ENCODE measurements at regions of chr19 and their contacts with region 1.

Region 1: DNA sequence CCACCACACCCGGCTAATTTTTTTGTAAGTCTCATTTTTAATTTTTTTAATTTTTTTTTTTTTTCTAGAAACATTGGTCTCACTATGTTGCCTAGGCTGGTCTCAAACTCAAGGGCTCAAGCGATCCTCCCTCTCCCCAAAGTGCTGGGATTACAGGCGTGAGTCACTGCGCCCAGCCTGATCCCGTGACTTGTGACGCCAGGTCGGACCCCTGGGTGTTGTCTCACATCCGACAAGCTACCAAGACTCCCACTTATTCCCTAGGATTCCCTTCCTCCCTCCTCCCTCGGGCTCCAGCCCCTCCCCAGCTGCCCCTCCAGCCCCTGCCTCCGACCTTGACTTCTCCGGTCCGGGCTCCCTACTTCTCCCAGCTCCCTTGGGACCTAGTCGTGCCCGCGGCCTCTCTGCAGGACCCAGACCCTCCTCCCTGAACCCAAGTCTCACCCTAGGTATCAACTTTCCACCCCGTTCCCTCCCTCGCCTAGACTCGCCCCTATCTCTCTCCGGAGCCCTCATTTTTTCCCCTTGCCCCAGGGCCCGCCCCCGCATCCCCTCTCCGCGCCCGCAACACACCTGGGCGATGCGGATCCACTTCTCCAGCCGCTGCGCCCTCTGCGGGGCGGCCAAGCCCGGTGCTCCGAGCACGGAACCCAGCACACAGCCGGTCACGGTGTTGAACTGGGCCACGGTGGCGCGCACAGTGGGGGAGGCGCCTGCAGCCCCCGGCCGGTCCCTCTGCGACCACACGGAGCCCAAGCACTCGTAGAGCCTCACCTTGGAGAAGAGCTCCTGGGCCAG is 13.1 kb downstream of the RGL3 start:
- DNase-seq: no peak
- H3K4me3 ChIP-seq: no peak overlapping the region
- H3K27ac ChIP-seq: no peak overlapping the region
- H3K4me1 ChIP-seq: peaks cover 0 to 3% (median 0%) of the 10 kb centered on the region in 4 experiments
- H3K27me3 ChIP-seq: peaks cover 0 to 13% (median 4%) of the 10 kb centered on the region in 5 experiments

Region 2: GRCh38 chr19:11422163-11423021 is 16.3 kb after region 1 on chr19:
- CTCF ChIA-PET with region 1: interaction called, 5 read pairs
- POLR2A ChIA-PET with region 1: interaction called, 11 read pairs
- DNase-seq: peak; percentile 70 to 84 (median 81)
- H3K4me3 ChIP-seq: peak overlapping the region in 4 of 7 experiments; percentile 3 to 61 (median 48)
- H3K27ac ChIP-seq: no peak overlapping the region
- H3K4me1 ChIP-seq: peaks cover 0 to 47% (median 36%) of the 10 kb centered on the region in 4 experiments
- H3K27me3 ChIP-seq: peaks cover 0 to 68% (median 41%) of the 10 kb centered on the region in 5 experiments

Region 3: DNA sequence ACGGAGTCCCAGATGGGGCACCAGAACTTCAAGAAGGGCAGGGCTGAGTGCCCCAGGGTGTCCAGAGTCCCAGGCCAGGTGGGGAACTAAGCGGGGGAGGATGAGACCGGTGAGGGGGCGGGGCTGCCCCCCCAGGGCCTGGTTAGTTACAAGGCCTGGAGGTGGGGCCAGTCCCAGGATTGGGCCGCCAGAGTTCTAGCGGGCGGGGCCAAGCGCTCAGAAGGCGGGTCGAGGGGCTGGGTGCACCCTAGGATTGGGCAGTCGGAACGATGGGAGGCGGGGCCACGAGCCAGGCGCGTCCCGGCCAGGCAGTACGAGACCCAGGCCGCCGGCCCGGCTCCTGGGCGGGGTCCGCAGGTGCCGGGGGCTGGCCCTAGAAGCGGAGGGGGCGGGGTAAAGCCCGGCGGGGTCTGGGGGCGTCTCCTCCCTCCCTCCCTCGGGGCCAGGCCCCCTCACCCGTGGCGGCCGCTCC is 99.0 kb after region 1 on chr19:
- CTCF ChIA-PET with region 1: no interaction called
- POLR2A ChIA-PET with region 1: no interaction called
- DNase-seq: peak; percentile 95 to 97 (median 97)
- H3K4me3 ChIP-seq: peak overlapping the region; percentile 73 to 89 (median 81)
- H3K27ac ChIP-seq: peak overlapping the region; percentile 58 to 93
- H3K4me1 ChIP-seq: peaks cover 0 to 16% (median 15%) of the 10 kb centered on the region in 4 experiments
- H3K27me3 ChIP-seq: no peaks in the 10 kb centered on the region